ENCODE measurements at regions of chr21 and their contacts with region 1.

Region 1: GRCh38 chr21:44382536-44382935 is 29.1 kb downstream of the TRPM2 start:
- DNase-seq: no peak
- H3K4me3 ChIP-seq: no peak overlapping the region
- H3K27ac ChIP-seq: no peak overlapping the region
- H3K4me1 ChIP-seq: no peaks in the 10 kb centered on the region
- H3K27me3 ChIP-seq: peaks cover 0 to 35% of the 10 kb centered on the region in 2 donors
- CTCF ChIP-seq: no peak
- POLR2A ChIP-seq: no peak

Region 2: GRCh38 chr21:44420416-44421205 is 38.1 kb after region 1 on chr21:
- intact Hi-C with region 1: loop called (anchors 1 kb)
- DNase-seq: peak in 1 of 2 donors; percentile 28
- H3K4me3 ChIP-seq: no peak overlapping the region
- H3K27ac ChIP-seq: no peak overlapping the region
- H3K4me1 ChIP-seq: no peaks in the 10 kb centered on the region
- H3K27me3 ChIP-seq: peaks cover 0 to 24% of the 10 kb centered on the region in 2 donors
- CTCF ChIP-seq: no peak
- POLR2A ChIP-seq: no peak

Measured in breast epithelium (tissue), 4 donors.